Mammary epithelial cell (primary cell): ENCODE measurements at regions of chr6 and their contacts with region 1.

Region 1: DNA sequence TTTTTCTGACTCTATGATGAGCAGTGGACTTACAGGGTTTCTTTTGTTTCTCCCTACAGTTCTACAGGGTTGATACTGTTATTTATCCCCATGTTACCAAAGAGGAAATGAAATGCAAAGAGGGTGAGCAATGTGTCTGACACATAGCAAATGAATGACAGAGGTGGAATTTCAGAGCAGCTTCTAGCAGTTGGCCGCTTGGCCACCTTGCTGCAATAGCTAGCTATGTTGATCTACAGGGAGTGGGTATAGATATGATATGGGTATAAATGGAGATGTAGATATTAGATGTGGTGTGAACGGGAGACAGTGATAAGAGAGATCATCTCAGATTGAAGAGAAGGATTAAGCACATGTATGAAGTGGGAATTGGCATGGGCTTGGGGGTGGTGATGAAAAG is 10.9 kb upstream of the SLC22A3 start:
- DNase-seq: peak; percentile 76
- H3K4me3 ChIP-seq: no peak overlapping the region
- H3K27ac ChIP-seq: no peak overlapping the region
- H3K4me1 ChIP-seq: peaks cover 16% of the 10 kb centered on the region
- H3K27me3 ChIP-seq: no peaks in the 10 kb centered on the region
- CTCF ChIP-seq: no peak

Region 2: DNA sequence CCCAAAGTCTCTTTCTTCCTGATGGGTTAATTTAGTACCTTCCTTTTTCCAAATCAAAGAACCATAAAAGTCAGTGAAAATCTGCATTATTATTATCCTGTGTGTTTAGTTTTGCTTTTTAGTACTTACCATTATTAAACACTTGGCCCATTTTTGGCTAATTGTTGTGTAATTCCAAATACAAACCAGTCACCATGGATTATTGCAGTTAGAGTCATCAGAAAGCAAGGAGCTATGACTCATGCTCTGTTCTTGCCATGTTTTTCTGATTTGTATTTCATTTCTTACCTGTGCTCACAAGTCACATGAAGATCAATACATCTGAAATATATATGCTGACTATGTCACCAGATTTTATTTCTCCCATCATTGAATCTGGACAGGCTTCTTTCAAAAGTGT is 42.2 kb after region 1 on chr6:
- CTCF ChIA-PET with region 1: no interaction called
- dilution Hi-C with region 1: no loop called
- in situ Hi-C with region 1: no loop called
- intact Hi-C with region 1: loop called (anchors 5 kb)
- DNase-seq: peak; percentile 71
- H3K4me3 ChIP-seq: no peak overlapping the region
- H3K27ac ChIP-seq: peak overlapping the region; percentile 63
- H3K4me1 ChIP-seq: peaks cover 26% of the 10 kb centered on the region
- H3K27me3 ChIP-seq: no peaks in the 10 kb centered on the region
- CTCF ChIP-seq: no peak

Region 3: DNA sequence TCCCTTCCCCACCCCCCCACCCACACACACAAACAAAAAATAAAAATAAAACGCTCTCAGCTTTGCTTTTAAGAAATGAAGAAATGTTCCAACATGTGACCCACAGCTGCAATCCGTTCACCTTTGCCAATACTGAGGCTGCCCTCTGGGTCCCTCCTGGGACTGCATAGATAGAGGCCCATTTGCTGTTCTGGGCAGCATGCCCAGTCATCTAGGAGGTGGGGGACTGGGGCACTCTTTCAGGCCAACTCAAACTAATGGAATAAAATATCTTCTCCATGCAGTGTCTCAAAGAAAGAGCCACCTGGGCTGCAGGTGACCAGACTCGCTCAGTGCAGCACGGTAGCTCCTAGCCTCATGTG is 90.7 kb after region 1 on chr6:
- CTCF ChIA-PET with region 1: no interaction called
- dilution Hi-C with region 1: no loop called
- in situ Hi-C with region 1: no loop called
- intact Hi-C with region 1: loop called (anchors 10 kb)
- DNase-seq: no peak
- H3K4me3 ChIP-seq: no peak overlapping the region
- H3K27ac ChIP-seq: no peak overlapping the region
- H3K4me1 ChIP-seq: peaks cover 15% of the 10 kb centered on the region
- H3K27me3 ChIP-seq: no peaks in the 10 kb centered on the region
- CTCF ChIP-seq: no peak